Aorta (tissue), 5 donors: ENCODE measurements at regions of chr5 and their contacts with region 1.

Region 1: GRCh38 chr5:128083033-128083810 is at the start of gene SLC12A2:
- DNase-seq: peak; percentile 96 to 97
- ATAC-seq: peak; percentile 95
- H3K4me3 ChIP-seq: peak within 1 kb of the TSS; percentile 76 to 93
- H3K27ac ChIP-seq: peak within 1 kb of the TSS; percentile 4 to 86
- H3K4me1 ChIP-seq: peaks cover 0 to 3% of the 10 kb centered on the region in 2 donors
- H3K27me3 ChIP-seq: no peaks in the 10 kb centered on the region
- total RNA-seq, gene SLC12A2: 14.3 to 16.7 TPM

Region 2: GRCh38 chr5:127517480-127518318 is 565.5 kb before region 1 on chr5 and contains the start of gene PRRC1:
- intact Hi-C with region 1: loop called in 1 of 2 experiments (anchors 5 kb)
- DNase-seq: peak; percentile 87 to 95
- ATAC-seq: peak; percentile 94
- H3K4me3 ChIP-seq: peak within 1 kb of the TSS; percentile 35 to 66
- H3K27ac ChIP-seq: peak within 1 kb of the TSS in 1 of 2 donors; percentile 58
- H3K4me1 ChIP-seq: peaks cover 0 to 6% of the 10 kb centered on the region in 2 donors
- H3K27me3 ChIP-seq: no peaks in the 10 kb centered on the region
- total RNA-seq, gene PRRC1: 46.2 to 47.9 TPM

Region 3: GRCh38 chr5:127875235-127876021 is 207.8 kb before region 1 on chr5:
- intact Hi-C with region 1: loop called in 1 of 2 experiments (anchors 10 kb)
- DNase-seq: peak in 1 of 2 donors; percentile 49
- ATAC-seq: no peak
- H3K4me3 ChIP-seq: no peak overlapping the region
- H3K27ac ChIP-seq: no peak overlapping the region
- H3K4me1 ChIP-seq: peaks cover 0 to 3% of the 10 kb centered on the region in 2 donors
- H3K27me3 ChIP-seq: no peaks in the 10 kb centered on the region

Region 4: GRCh38 chr5:128237546-128237945 is 154.3 kb after region 1 on chr5:
- intact Hi-C with region 1: no loop called
- DNase-seq: no peak
- ATAC-seq: no peak
- H3K4me3 ChIP-seq: no peak overlapping the region
- H3K27ac ChIP-seq: no peak overlapping the region
- H3K4me1 ChIP-seq: no peaks in the 10 kb centered on the region
- H3K27me3 ChIP-seq: peaks cover 0 to 1% of the 10 kb centered on the region in 2 donors